ENCODE measurements at regions of chr14 and their contacts with region 1.

Region 1: GRCh38 chr14:35826218-35826951 is at the start of gene BRMS1L:
- DNase-seq: peak; percentile 97
- H3K4me3 ChIP-seq: peak within 1 kb of the TSS; percentile 76 to 91 (median 83)
- H3K27ac ChIP-seq: peak within 1 kb of the TSS; percentile 62
- H3K4me1 ChIP-seq: peaks cover 5% of the 10 kb centered on the region
- H3K27me3 ChIP-seq: no peaks in the 10 kb centered on the region
- CTCF ChIP-seq: peak in 1 of 2 donors; percentile 3
- total RNA-seq, gene BRMS1L: 4.0 to 11.9 TPM

Region 2: DNA sequence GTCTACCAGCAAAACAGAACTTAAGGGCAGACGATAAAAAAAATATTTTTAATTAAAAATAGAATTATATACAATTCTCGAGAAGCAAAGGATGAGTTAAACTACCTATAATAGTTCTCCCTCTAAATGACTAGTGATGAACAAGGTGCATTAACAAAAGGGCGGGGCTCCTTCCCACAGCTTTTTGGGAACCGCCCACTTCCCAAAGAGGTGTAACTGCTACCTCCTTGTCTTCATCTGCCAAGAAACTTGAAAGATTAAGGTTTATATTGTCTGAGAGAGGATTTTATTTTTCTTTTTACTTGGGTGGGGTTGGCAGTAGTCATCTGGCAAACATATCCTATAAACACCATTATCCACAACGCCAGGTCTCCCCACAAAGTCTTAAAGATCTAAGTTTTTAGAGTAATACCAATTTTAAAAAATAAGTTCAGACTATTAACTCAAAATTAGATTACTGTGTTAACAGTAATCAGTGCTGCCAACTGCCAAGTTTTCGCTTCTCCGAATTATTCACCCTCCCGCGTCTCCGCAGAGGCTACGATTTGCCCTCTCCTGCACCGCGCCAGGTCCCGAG is 18.2 kb before region 1 on chr14:
- CTCF ChIA-PET with region 1: interaction called, 6 read pairs
- dilution Hi-C with region 1: no loop called
- in situ Hi-C with region 1: no loop called
- intact Hi-C with region 1: loop called (anchors 1 kb)
- DNase-seq: peak; percentile 58
- H3K4me3 ChIP-seq: peak overlapping the region; percentile 60 to 77 (median 68)
- H3K27ac ChIP-seq: peak overlapping the region; percentile 43
- H3K4me1 ChIP-seq: peaks cover 8% of the 10 kb centered on the region
- H3K27me3 ChIP-seq: no peaks in the 10 kb centered on the region
- CTCF ChIP-seq: no peak

Region 3: DNA sequence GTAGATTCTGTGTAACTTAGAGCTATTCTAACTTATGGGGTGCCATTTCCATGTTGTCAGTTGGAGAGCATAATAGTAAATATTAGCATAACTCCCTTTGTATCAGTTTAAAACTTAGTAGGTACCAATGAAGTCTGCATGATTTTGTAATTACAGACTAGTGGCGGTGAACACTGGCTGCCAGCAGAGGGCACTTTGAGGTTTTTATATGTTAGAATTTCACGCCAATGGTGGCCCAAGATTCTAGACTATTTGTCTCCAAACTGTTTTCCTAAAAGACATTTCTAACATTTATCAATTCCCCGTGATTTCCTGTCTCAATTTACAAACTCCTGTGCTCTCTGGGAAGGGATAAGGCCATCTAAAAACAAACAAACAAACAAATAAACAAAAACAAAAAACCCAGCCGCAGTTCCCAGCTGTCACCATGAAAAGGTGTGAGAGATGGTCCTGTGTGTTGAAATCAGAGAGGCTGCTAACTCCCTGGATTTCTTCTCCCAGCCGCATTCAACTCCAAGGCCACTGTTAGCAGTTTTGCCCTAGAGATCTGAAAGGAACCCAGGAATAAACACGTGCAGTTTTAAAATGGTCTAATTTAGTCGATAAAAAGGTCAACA is 57.4 kb after region 1 on chr14:
- CTCF ChIA-PET with region 1: no interaction called
- dilution Hi-C with region 1: no loop called
- in situ Hi-C with region 1: no loop called
- intact Hi-C with region 1: loop called (anchors 1 kb)
- DNase-seq: no peak
- H3K4me3 ChIP-seq: no peak overlapping the region
- H3K27ac ChIP-seq: no peak overlapping the region
- H3K4me1 ChIP-seq: peaks cover 8% of the 10 kb centered on the region
- H3K27me3 ChIP-seq: no peaks in the 10 kb centered on the region
- CTCF ChIP-seq: peak; percentile 72 to 75

Measured in mammary epithelial cell (primary cell).